Adrenal gland (tissue), 19 donors: ENCODE measurements at regions of chr11 and their contacts with region 1.

Region 1: DNA sequence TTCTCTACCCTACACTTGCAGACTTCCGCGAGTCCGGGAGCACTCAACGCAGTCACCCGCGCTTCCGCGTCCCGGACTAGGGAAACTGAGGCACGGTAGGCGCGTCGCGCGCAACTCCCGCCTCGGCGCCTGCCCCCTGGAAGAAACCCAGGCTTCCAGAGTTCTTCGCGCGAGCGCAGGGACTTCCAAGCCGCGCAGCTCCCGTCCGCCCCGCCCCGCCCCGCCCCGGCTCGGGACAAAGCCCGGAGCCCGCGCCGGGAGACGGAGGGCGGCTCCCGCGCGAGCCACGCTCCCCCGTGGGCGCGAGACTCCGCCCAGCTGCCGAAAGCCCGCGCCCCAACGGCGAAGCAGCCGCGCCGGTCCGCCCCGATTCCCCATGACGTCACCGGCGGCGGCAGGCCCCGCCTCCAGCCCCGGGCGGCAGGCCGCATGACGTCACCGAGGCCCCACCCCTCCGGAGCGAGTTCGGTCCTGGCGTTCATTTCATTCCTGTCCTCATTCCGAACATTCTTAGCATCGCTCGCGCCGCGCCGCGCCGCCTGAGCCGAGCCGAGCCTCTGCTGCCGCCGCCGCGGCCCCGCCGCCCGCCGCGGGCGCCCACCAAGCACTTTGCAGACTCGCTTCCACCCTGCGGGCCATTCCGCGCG is at the start of gene TEAD1:
- DNase-seq: peak; percentile 95 to 99 (median 98)
- H3K4me3 ChIP-seq: peak within 1 kb of the TSS; percentile 28 to 93 (median 67)
- H3K27ac ChIP-seq: peak within 1 kb of the TSS; percentile 84 to 100 (median 89)
- H3K4me1 ChIP-seq: peaks cover 9 to 23% of the 10 kb centered on the region in 2 donors
- H3K27me3 ChIP-seq: no peaks in the 10 kb centered on the region
- CTCF ChIP-seq: no peak
- POLR2A ChIP-seq: peak; percentile 86 to 94
- total RNA-seq, gene TEAD1: 24.1 to 49.9 (median 44.0) TPM

Region 2: DNA sequence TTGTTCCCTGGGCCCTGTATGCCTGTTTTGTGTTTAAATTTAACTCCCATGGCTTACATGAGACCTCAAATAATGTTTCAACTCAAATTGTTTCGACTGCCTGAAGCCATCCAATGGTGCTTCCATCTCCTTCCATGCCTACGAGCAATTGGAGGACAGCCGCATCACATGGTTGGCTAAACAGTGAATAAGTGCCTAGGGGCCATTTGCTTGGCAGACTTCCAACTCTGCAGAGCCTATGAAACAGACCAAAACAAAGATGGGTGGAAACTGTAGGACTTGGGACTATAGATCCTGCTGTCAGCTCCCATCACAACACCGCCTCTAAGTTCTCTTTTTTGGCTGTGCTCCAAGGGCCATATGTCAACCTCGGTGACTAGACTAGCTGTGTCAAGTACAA is 212.5 kb before region 1 on chr11:
- intact Hi-C with region 1: no loop called
- DNase-seq: peak in 1 of 7 donors; percentile 48
- H3K4me3 ChIP-seq: no peak overlapping the region
- H3K27ac ChIP-seq: no peak overlapping the region
- H3K4me1 ChIP-seq: no peaks in the 10 kb centered on the region
- H3K27me3 ChIP-seq: no peaks in the 10 kb centered on the region
- CTCF ChIP-seq: no peak
- POLR2A ChIP-seq: no peak

Region 3: GRCh38 chr11:12618743-12619540 is 55.1 kb before region 1 on chr11:
- intact Hi-C with region 1: no loop called
- DNase-seq: no peak
- H3K4me3 ChIP-seq: no peak overlapping the region
- H3K27ac ChIP-seq: no peak overlapping the region
- H3K4me1 ChIP-seq: no peaks in the 10 kb centered on the region
- H3K27me3 ChIP-seq: no peaks in the 10 kb centered on the region
- CTCF ChIP-seq: no peak
- POLR2A ChIP-seq: no peak

Region 4: DNA sequence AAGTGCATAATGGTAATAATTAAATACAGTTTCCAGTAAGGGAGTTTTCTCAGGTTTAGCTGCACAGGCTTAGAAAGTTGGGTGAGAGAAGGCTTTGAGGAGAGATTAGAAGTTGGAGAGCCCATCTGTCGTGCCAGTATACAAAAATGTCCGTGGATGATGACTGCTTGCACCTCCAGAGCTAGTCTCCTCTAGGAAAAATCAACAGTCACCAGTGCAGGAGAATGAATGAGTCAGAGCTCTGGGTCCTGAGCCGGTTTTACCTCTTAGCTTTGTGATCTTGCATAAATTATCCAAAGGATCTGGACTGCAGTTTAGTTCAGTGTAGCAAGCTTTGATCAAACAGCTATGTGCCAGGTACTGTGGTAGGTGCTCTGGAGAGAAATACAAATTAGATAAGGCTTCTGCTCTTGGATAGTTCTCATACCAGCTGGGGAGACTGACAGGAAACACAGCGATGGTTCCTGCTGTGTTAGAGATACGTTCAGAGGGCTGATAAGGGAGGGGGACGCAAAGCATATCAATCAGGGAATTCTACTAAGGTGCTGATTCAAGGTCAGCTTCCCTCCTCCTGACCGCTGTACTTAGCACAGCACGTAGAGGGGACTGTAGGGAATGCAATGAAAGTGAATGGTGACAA is 126.1 kb after region 1 on chr11:
- intact Hi-C with region 1: no loop called
- DNase-seq: peak in 3 of 7 donors; percentile 25 to 39 (median 28)
- H3K4me3 ChIP-seq: no peak overlapping the region
- H3K27ac ChIP-seq: no peak overlapping the region
- H3K4me1 ChIP-seq: peaks cover 0 to 24% of the 10 kb centered on the region in 2 donors
- H3K27me3 ChIP-seq: no peaks in the 10 kb centered on the region
- CTCF ChIP-seq: no peak
- POLR2A ChIP-seq: no peak

Region 5: GRCh38 chr11:12813371-12814225 is 139.6 kb after region 1 on chr11:
- intact Hi-C with region 1: loop called (anchors 10 kb)
- DNase-seq: peak in 6 of 7 donors; percentile 41 to 67 (median 57)
- H3K4me3 ChIP-seq: no peak overlapping the region
- H3K27ac ChIP-seq: peak overlapping the region in 2 of 5 donors; percentile 74 to 86
- H3K4me1 ChIP-seq: peaks cover 20 to 30% of the 10 kb centered on the region in 2 donors
- H3K27me3 ChIP-seq: no peaks in the 10 kb centered on the region
- CTCF ChIP-seq: peak in 2 of 6 experiments; percentile 17 to 22
- POLR2A ChIP-seq: no peak